GM12878 (cell line): ENCODE measurements at regions of chr14 and their contacts with region 1.

Region 1: GRCh38 chr14:91350813-91351511 is 66.7 kb downstream of the CCDC88C start:
- DNase-seq: peak; percentile 91
- ATAC-seq: peak; percentile 66
- H3K4me3 ChIP-seq: peak overlapping the region; percentile 38
- H3K27ac ChIP-seq: peak overlapping the region; percentile 98
- H3K4me1 ChIP-seq: peaks cover 78% of the 10 kb centered on the region
- H3K27me3 ChIP-seq: no peaks in the 10 kb centered on the region
- CTCF ChIP-seq: no peak
- EP300 ChIP-seq: peak; percentile 75 to 83
- POLR2A ChIP-seq: peak; percentile 62
- RAD21 ChIP-seq: no peak

Region 2: GRCh38 chr14:91332151-91332985 is 18.6 kb before region 1 on chr14:
- CTCF ChIA-PET with region 1: interaction called, 10 read pairs
- POLR2A ChIA-PET with region 1: interaction called, 4 read pairs
- RAD21 ChIA-PET with region 1: interaction called, 7 read pairs
- SMC1A ChIA-PET with region 1: interaction called, 16 read pairs
- in situ Hi-C with region 1: no loop called
- intact Hi-C with region 1: no loop called
- DNase-seq: no peak
- ATAC-seq: no peak
- H3K4me3 ChIP-seq: no peak overlapping the region
- H3K27ac ChIP-seq: no peak overlapping the region
- H3K4me1 ChIP-seq: peaks cover 39% of the 10 kb centered on the region
- H3K27me3 ChIP-seq: no peaks in the 10 kb centered on the region
- CTCF ChIP-seq: no peak
- EP300 ChIP-seq: no peak
- POLR2A ChIP-seq: no peak; the same call in 1 of the 2 replicates
- RAD21 ChIP-seq: no peak

Region 3: DNA sequence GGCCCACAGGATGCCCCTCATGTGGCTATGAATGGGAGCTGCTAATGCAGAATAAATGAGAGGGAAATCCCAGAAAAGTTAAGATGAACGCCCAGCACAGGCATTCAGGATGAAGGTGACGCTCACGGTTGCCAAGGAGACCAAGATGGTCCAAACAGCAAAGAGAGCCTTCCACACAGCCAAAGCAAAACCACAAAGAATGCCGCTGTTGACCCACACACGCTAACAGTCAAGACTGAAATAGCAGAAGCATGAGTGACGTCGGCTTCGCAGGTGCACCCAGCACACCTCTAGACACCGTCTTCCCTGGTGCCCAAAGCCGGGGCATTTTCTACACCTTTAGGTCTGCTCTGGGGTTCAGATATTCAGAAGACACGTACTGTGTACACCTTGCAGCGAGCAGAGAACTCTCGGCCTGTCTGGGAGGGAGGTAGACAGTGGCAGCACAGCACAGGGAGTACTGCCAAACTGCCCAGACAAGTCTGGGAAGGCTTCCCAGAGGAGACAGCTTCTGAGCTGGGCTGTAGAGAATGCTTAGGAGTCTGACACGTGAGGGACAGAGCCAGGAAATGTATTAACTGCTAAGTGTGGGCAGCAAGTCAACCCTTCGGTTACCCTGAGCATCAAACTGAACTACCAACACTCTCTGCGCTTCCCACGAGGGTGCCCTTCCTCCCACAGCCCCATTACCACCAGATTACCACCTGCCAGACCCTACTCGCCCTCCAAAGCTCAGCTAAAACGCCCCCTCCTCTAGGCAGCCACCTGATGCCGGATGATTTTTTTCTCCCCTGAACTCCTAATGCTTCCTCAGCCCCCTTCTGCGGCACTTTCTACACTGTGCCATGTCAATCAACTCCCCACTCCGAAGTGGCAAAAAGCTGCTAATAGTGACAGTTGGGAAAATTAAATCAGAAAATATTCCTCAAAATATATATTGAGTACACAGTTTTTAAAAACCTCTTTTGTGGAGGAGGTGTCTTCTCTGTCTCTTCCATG is 16.5 kb after region 1 on chr14:
- CTCF ChIA-PET with region 1: interaction called, 48 read pairs
- POLR2A ChIA-PET with region 1: interaction called, 37 read pairs
- RAD21 ChIA-PET with region 1: interaction called, 79 read pairs
- SMC1A ChIA-PET with region 1: interaction called, 349 read pairs
- in situ Hi-C with region 1: no loop called
- intact Hi-C with region 1: loop called (anchors 1 kb)
- DNase-seq: peak; percentile 82
- ATAC-seq: peak; percentile 61
- H3K4me3 ChIP-seq: peak overlapping the region; percentile 61; the same call in 1 of the 2 replicates
- H3K27ac ChIP-seq: peak overlapping the region; percentile 85
- H3K4me1 ChIP-seq: peaks cover 96% of the 10 kb centered on the region
- H3K27me3 ChIP-seq: no peaks in the 10 kb centered on the region
- CTCF ChIP-seq: no peak
- EP300 ChIP-seq: peak; percentile 93 to 98
- POLR2A ChIP-seq: peak; percentile 53; the same call in 1 of the 2 replicates
- RAD21 ChIP-seq: no peak

Region 4: DNA sequence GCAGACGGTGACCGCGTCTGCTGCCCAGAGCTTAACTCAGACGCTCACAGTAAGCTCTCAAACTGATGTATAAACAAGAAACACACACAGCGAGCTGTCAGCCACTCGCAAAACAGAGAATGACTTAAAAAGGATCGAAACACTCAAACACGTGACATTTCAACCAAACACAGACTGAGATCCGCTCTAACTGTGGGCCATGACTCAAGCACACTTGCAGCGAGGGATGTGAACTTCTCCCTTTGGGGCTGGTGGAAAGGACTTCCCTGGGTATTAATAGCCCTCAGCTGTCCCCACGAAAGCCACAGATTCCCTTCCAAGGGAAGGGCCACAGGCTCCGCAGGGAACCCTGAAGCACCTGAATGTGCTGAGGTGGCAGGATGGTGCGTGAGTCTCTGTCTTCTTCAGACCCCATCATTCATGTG is 37.6 kb after region 1 on chr14:
- CTCF ChIA-PET with region 1: interaction called, 6 read pairs
- POLR2A ChIA-PET with region 1: no interaction called
- RAD21 ChIA-PET with region 1: interaction called, 6 read pairs
- SMC1A ChIA-PET with region 1: interaction called, 12 read pairs
- in situ Hi-C with region 1: no loop called
- intact Hi-C with region 1: no loop called
- DNase-seq: no peak
- ATAC-seq: peak; percentile 85
- H3K4me3 ChIP-seq: no peak overlapping the region; the same call in 1 of the 2 replicates
- H3K27ac ChIP-seq: peak overlapping the region; percentile 88
- H3K4me1 ChIP-seq: peaks cover 61% of the 10 kb centered on the region
- H3K27me3 ChIP-seq: no peaks in the 10 kb centered on the region
- CTCF ChIP-seq: no peak
- EP300 ChIP-seq: no peak
- POLR2A ChIP-seq: no peak
- RAD21 ChIP-seq: no peak

Region 5: GRCh38 chr14:91410771-91411536 is 60.0 kb after region 1 on chr14:
- CTCF ChIA-PET with region 1: interaction called, 70 read pairs
- POLR2A ChIA-PET with region 1: interaction called, 140 read pairs
- RAD21 ChIA-PET with region 1: interaction called, 236 read pairs
- SMC1A ChIA-PET with region 1: interaction called, 205 read pairs
- in situ Hi-C with region 1: no loop called
- intact Hi-C with region 1: loop called (anchors 1 kb)
- DNase-seq: no peak
- ATAC-seq: peak; percentile 44
- H3K4me3 ChIP-seq: peak overlapping the region; percentile 62
- H3K27ac ChIP-seq: peak overlapping the region; percentile 80
- H3K4me1 ChIP-seq: peaks cover 46% of the 10 kb centered on the region
- H3K27me3 ChIP-seq: no peaks in the 10 kb centered on the region
- CTCF ChIP-seq: no peak
- EP300 ChIP-seq: no peak
- POLR2A ChIP-seq: no peak
- RAD21 ChIP-seq: no peak

Region 6: DNA sequence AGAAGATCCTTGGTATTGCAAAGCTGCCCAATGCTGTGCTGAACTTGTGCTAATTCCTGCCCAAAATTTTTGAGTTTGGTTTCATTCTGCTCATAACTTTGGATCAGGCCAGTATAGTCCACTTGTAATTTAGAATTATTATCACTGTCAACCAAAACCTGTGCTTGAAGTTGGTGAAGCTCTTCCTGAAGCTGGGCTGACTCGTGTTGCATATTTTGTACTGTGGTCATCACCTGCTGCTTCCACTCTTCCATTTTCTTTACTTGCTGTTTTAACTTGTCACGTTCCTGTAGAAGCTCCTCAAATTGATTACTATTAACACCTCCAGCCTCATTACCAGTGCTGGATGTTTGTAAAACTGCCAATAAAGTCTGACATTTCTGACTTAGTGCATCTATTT is 653.1 kb after region 1 on chr14:
- CTCF ChIA-PET with region 1: no interaction called
- POLR2A ChIA-PET with region 1: no interaction called
- RAD21 ChIA-PET with region 1: no interaction called
- SMC1A ChIA-PET with region 1: no interaction called
- in situ Hi-C with region 1: no loop called
- intact Hi-C with region 1: no loop called
- DNase-seq: no peak
- ATAC-seq: no peak
- H3K4me3 ChIP-seq: no peak overlapping the region
- H3K27ac ChIP-seq: no peak overlapping the region
- H3K4me1 ChIP-seq: no peaks in the 10 kb centered on the region
- H3K27me3 ChIP-seq: no peaks in the 10 kb centered on the region
- CTCF ChIP-seq: no peak
- EP300 ChIP-seq: no peak
- POLR2A ChIP-seq: no peak
- RAD21 ChIP-seq: no peak